H1 (cell line): ENCODE measurements at regions of chr11 and their contacts with region 1.

Region 1: DNA sequence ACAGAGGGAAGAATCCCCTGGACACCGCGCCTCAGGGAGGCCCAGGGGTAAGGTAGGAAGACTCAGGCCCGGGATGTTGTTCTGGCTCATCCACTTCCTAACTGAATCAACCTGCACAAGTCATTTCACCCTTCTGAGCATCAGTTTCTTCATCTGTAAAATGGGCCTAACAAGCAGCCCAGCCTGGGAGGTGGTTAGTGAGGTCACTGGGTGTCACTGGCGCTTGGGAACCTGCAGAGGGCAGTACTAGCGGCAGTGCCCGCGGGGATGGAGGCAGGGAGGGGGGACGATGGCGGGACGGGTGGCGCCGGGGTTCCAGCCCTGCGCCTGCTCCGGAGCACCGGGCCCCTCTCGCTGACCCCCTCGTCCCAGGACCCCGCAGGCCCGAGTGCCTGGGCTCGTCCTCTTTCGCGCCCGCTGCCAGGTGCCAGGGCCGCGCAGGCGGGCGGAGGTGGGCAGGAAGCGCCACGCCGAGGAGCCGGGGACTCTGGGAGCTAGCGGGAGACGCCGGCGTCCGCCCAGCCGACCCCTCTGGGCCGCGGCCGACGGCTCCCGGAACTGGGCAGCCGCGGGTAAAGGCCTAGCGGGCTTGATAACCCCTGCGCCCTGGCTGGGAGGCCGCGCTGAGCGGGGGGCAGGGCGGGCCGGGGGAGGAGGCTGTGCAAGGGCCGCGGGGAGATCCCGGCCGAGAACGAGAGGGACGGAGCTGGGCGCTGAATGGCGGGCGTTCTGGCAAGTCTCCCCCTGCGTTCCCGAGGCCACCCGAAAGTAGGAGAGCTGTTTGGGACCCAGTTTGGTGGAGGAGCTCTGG is at the start of gene NLRX1:
- DNase-seq: peak; percentile 51 to 90
- H3K4me3 ChIP-seq: peak within 1 kb of the TSS; percentile 64 to 87 (median 68)
- H3K27ac ChIP-seq: peak within 1 kb of the TSS; percentile 88
- H3K4me1 ChIP-seq: peaks cover 0 to 4% (median 1%) of the 10 kb centered on the region in 4 experiments; a peak in 4 of 7 replicates
- H3K27me3 ChIP-seq: no peaks in the 10 kb centered on the region
- CTCF ChIP-seq: peak; percentile 82 to 94 (median 90)
- EP300 ChIP-seq: peak in 1 of 2 experiments; percentile 56; a peak in 1 of 3 replicates
- POLR2A ChIP-seq: peak in 1 of 2 experiments; percentile 69; a peak in 2 of 3 replicates
- RAD21 ChIP-seq: peak; percentile 43 to 62; a peak in 3 of 4 replicates
- total RNA-seq, gene NLRX1: 12.9 and 13.2 TPM in 2 replicates

Region 2: GRCh38 chr11:119181677-119182412 is 13.2 kb after region 1 on chr11:
- CTCF ChIA-PET with region 1: interaction called, 7 read pairs
- POLR2A ChIA-PET with region 1: interaction called, 12 read pairs
- DNase-seq: no peak
- H3K4me3 ChIP-seq: no peak overlapping the region
- H3K27ac ChIP-seq: no peak overlapping the region
- H3K4me1 ChIP-seq: no peaks in the 10 kb centered on the region; a peak in 1 of 7 replicates
- H3K27me3 ChIP-seq: no peaks in the 10 kb centered on the region
- CTCF ChIP-seq: no peak
- EP300 ChIP-seq: no peak
- POLR2A ChIP-seq: no peak
- RAD21 ChIP-seq: no peak